Posterior vena cava (tissue), 2 donors: ENCODE measurements at regions of chr12 and their contacts with region 1.

Region 1: GRCh38 chr12:129423041-129423580 is 480.7 kb downstream of the TMEM132D start:
- DNase-seq: no peak

Region 2: DNA sequence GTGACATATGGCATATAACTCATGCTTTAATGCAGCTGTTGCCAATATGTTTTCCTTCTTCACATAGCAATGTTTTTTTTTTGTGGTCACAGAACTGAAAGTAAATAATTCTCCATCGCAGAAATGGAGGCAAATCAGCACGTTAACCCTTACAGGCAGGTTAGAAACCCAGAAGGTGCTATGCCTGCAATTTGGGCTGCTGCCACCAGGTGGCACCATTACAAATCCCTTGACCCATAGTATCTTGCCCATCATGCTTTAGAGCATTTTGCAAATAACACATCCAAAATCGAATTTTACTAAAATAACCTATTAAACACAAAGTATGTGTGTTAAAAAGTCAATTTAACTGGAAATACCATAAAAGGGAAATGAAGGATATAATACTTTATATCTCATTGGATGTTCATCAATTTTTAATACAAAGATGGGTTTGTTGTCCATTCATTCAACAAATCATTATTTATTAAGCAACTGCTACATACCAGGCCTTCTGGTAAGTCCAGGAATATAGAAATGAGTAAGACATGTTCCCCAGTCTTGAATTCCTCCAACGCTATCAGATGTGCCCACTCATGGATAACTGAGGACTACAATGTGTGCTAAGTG is 229.7 kb before region 1 on chr12:
- intact Hi-C with region 1: no loop called
- DNase-seq: no peak

Region 3: GRCh38 chr12:129459886-129460285 is 36.8 kb after region 1 on chr12:
- intact Hi-C with region 1: no loop called
- DNase-seq: no peak

Region 4: DNA sequence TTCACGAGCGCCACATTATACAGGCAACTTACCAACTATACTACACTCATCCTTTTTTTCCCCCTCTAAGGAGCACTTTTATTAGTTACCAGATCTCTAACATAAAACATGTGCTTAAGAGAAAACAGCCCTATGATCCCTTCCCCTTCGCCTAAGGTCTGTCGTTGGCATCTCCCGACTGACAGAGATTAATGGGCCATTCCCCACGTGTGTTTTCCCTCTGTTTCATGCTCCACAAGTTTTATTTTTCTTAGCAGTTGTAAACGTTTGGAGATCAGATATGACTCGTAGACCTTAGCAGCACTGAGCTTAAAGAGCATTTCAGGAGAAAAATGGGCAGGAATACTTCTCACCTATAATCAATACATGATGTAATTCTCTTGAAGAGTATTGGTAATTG is 687.8 kb after region 1 on chr12:
- intact Hi-C with region 1: no loop called
- DNase-seq: no peak

Region 5: GRCh38 chr12:130606231-130606630 is 1183.1 kb after region 1 on chr12:
- intact Hi-C with region 1: loop called in 1 of 2 experiments (anchors 5 kb)
- DNase-seq: no peak